CD4-positive, alpha-beta memory T cell (primary cell): ENCODE measurements at regions of chr2 and their contacts with region 1.

Region 1: DNA sequence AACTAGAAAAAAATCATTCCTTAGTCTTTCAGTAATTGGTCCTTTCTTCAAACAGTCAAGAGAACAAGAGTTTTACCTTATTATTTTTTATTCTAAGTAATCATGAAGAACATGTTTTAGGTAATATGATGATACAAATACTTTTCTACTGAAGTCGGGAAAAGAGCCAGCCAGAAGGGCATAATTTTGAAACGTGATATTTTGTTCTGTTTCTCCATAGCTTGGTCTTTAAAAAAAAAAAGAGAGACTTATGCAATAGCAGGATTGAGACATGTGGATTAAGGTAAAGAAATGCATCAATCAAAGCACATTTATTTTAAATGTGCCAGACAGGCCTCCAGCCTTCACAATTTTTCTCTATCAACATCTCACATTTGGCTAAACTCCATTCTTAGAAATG is 1016.8 kb downstream of the CNTNAP5 start:
- DNase-seq: no peak
- H3K4me3 ChIP-seq: no peak overlapping the region
- H3K4me3 Mint-ChIP-seq: no peak overlapping the region
- H3K27ac ChIP-seq: no peak overlapping the region
- H3K27ac Mint-ChIP-seq: no peak overlapping the region
- H3K4me1 ChIP-seq: no peaks in the 10 kb centered on the region
- H3K4me1 Mint-ChIP-seq: no peaks in the 10 kb centered on the region
- H3K27me3 ChIP-seq: no peaks in the 10 kb centered on the region
- H3K27me3 Mint-ChIP-seq: no peaks in the 10 kb centered on the region

Region 2: GRCh38 chr2:123513351-123513750 is 1528.5 kb before region 1 on chr2:
- CTCF ChIA-PET with region 1: no interaction called
- POLR2A ChIA-PET with region 1: no interaction called
- intact Hi-C with region 1: no loop called
- DNase-seq: no peak
- H3K4me3 ChIP-seq: no peak overlapping the region
- H3K4me3 Mint-ChIP-seq: no peak overlapping the region
- H3K27ac ChIP-seq: no peak overlapping the region
- H3K27ac Mint-ChIP-seq: no peak overlapping the region
- H3K4me1 ChIP-seq: no peaks in the 10 kb centered on the region
- H3K4me1 Mint-ChIP-seq: no peaks in the 10 kb centered on the region
- H3K27me3 ChIP-seq: no peaks in the 10 kb centered on the region
- H3K27me3 Mint-ChIP-seq: no peaks in the 10 kb centered on the region

Region 3: GRCh38 chr2:124973396-124973795 is 68.5 kb before region 1 on chr2:
- CTCF ChIA-PET with region 1: no interaction called
- POLR2A ChIA-PET with region 1: no interaction called
- intact Hi-C with region 1: loop called (anchors 2 kb)
- DNase-seq: no peak
- H3K4me3 ChIP-seq: no peak overlapping the region
- H3K4me3 Mint-ChIP-seq: no peak overlapping the region
- H3K27ac ChIP-seq: no peak overlapping the region
- H3K27ac Mint-ChIP-seq: no peak overlapping the region
- H3K4me1 ChIP-seq: no peaks in the 10 kb centered on the region
- H3K4me1 Mint-ChIP-seq: no peaks in the 10 kb centered on the region
- H3K27me3 ChIP-seq: no peaks in the 10 kb centered on the region
- H3K27me3 Mint-ChIP-seq: no peaks in the 10 kb centered on the region